Psoas muscle (tissue), 8 donors: ENCODE measurements at regions of chr19 and their contacts with region 1.

Region 1: GRCh38 chr19:16495982-16496612 is at the starts of genes C19orf44 and CALR3:
- DNase-seq: peak; percentile 99
- ATAC-seq: peak; percentile 96 to 98 (median 98)
- H3K4me3 ChIP-seq: peak within 1 kb of the TSS; percentile 81
- H3K27ac ChIP-seq: peak within 1 kb of the TSS; percentile 89
- H3K4me1 ChIP-seq: peaks cover 8% of the 10 kb centered on the region
- H3K27me3 ChIP-seq: no peaks in the 10 kb centered on the region
- CTCF ChIP-seq: peak; percentile 18
- total RNA-seq, gene C19orf44: 3.8 to 7.1 (median 5.2) TPM
- total RNA-seq, gene CALR3: 0.32 TPM in 1 of 4 donors, not detected in the others

Region 2: DNA sequence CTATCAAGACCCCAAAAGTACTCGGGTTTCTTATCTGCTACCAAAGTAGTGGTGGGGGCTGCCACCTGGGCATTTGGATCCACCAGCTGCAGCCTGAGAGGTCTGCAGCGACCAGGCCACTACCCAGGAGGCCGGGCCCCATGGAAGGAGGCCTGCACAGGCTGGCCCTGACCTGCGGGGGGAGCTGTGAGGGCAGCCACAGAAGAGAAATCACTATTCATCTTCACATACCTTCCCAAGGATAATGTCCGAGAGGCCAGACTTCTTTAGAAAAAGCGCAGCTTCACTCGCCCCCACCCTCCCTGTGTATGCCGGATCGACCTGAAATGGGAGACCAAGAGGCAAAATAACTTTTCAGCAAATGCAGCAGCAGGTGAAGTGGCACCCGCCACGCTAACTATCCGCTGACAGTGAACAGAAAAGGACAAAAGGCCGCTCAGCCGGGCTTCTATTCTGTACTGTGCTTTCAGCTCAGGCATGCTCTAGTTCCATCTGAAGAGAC is 54.4 kb before region 1 on chr19:
- intact Hi-C with region 1: loop called in 1 of 2 experiments (anchors 5 kb)
- DNase-seq: no peak
- ATAC-seq: peak; percentile 66 to 79 (median 74)
- H3K4me3 ChIP-seq: no peak overlapping the region
- H3K27ac ChIP-seq: peak overlapping the region; percentile 82
- H3K4me1 ChIP-seq: peaks cover 53% of the 10 kb centered on the region
- H3K27me3 ChIP-seq: no peaks in the 10 kb centered on the region
- CTCF ChIP-seq: peak; percentile 58

Region 3: DNA sequence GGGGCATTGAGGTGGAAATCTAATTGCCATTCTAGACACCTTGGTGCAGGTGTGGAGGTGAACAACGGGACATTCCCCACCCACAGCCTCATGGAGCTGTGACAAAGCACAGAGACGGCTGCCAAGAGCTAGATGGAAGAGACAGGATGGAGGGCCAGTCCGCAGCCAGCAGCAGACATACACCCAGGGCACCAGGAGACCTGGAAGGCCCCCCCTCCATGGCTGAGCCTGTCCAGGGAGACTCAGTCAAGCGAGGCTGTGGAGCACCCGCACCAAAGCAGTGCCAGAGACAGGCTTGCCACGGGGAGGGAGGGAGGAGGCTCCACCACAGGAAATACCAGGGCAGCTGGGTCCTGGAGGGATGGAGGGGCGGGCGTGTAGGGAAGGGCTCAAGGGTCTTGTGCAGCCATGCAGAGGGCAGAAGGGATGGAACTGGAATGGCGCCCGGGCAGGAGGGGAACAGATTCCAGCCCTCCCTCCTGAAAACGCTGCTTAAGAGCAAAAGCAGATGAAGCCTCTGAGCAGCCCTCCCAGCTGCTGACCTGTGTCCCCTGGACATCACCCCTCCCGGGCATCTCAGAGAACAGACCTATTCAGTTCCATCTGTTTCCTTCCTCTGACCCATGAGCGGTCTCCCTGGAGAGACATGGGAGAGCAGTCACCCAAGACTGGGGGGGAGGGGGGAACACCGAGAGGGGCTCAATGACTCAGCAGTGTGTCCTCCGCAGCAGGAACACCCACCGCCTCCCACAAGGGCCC is 38.7 kb before region 1 on chr19:
- intact Hi-C with region 1: no loop called
- DNase-seq: peak; percentile 49 to 76
- ATAC-seq: peak; percentile 15 to 42 (median 30)
- H3K4me3 ChIP-seq: peak overlapping the region; percentile 44
- H3K27ac ChIP-seq: peak overlapping the region; percentile 94
- H3K4me1 ChIP-seq: peaks cover 93% of the 10 kb centered on the region
- H3K27me3 ChIP-seq: no peaks in the 10 kb centered on the region
- CTCF ChIP-seq: no peak

Region 4: GRCh38 chr19:16542045-16542909 is 46.2 kb after region 1 on chr19 and contains the start of gene CHERP:
- intact Hi-C with region 1: loop called in 1 of 2 experiments (anchors 5 kb)
- DNase-seq: peak; percentile 94 to 98
- ATAC-seq: peak; percentile 97
- H3K4me3 ChIP-seq: peak within 1 kb of the TSS; percentile 94
- H3K27ac ChIP-seq: peak within 1 kb of the TSS; percentile 91
- H3K4me1 ChIP-seq: peaks cover 22% of the 10 kb centered on the region
- H3K27me3 ChIP-seq: no peaks in the 10 kb centered on the region
- CTCF ChIP-seq: no peak
- total RNA-seq, gene CHERP: 30.1 to 36.2 (median 33.5) TPM